HCT116 (cell line): ENCODE measurements at regions of chr3 and their contacts with region 1.

Region 1: GRCh38 chr3:16600780-16601539 is 4.3 kb downstream of the DAZL start:
- DNase-seq: peak; percentile 72
- ATAC-seq: peak; percentile 85
- H3K4me3 ChIP-seq: peak overlapping the region in 1 of 2 experiments; percentile 34; a peak in 1 of 4 replicates
- H3K27ac ChIP-seq: no peak overlapping the region
- H3K4me1 ChIP-seq: no peaks in the 10 kb centered on the region
- H3K27me3 ChIP-seq: no peaks in the 10 kb centered on the region
- CTCF ChIP-seq: peak; percentile 60 to 69 (median 69)
- POLR2A ChIP-seq: no peak
- RAD21 ChIP-seq: peak; percentile 92

Region 2: DNA sequence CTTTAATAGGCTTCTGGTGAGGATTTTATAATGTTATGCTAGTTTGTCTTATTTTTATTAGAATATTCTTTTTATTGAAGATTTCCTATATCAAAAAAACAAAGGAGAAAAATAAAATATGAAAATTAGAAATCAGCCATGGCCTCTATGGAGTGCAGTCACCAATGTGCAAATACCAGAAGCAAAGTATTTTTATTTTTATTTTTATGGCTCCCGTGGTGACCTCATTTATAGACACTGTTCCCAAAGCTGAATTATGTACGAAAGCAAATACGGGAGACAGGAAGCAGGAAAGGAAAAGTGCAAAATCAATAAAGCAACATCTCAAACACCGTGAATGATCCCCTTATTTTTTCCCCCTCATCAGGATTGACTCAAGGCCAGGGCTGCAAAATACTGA is 30.8 kb before region 1 on chr3:
- CTCF ChIA-PET with region 1: no interaction called
- POLR2A ChIA-PET with region 1: no interaction called
- RAD21 ChIA-PET with region 1: no interaction called
- intact Hi-C with region 1: no loop called
- DNase-seq: no peak
- ATAC-seq: no peak
- H3K4me3 ChIP-seq: no peak overlapping the region
- H3K27ac ChIP-seq: no peak overlapping the region
- H3K4me1 ChIP-seq: no peaks in the 10 kb centered on the region
- H3K27me3 ChIP-seq: no peaks in the 10 kb centered on the region
- CTCF ChIP-seq: no peak
- POLR2A ChIP-seq: no peak
- RAD21 ChIP-seq: no peak

Region 3: DNA sequence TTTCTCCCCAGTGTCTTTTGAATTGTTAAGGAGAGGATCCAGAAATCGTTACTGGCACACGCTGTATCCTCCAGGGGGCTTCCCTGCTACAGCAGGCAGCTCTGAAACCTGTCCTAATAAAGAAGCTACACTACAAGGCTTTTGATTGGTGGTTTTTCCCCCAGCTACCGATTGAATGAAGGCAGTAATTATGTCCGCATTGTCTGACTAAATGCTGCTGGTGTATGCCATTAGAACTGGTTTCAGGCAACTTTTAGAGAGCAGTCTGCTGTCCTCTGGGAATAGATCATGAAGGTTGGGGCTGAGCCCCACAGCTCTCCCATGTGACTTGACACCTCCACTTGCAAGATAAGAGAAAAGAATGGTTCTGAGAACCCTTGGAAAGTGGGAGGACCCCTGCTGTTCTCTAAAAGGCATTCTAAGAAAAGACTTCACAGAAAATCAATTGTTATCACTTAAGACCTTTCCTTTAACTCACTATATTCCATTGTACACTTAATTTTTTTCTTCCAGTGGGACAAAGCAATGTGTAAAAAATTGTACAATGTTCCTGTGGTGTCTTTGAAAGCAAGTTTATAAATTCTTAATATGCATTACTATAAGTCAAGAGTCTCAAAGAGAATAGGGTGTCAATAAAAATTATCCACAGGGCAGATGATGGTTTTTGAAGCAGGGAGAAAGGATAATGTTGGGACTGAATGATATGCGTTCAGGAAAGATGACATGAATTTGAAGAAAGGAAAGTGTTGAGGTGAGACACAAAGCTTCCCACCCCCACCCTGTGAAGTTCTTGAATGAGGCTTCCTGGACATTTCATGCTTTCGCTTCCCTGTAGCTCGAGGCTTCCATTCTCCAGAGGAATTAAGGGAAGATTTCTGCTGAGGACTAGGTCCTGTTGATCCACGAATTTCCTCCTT is 57.3 kb after region 1 on chr3:
- CTCF ChIA-PET with region 1: no interaction called
- POLR2A ChIA-PET with region 1: no interaction called
- RAD21 ChIA-PET with region 1: no interaction called
- intact Hi-C with region 1: no loop called
- DNase-seq: no peak
- ATAC-seq: no peak
- H3K4me3 ChIP-seq: no peak overlapping the region
- H3K27ac ChIP-seq: no peak overlapping the region
- H3K4me1 ChIP-seq: no peaks in the 10 kb centered on the region
- H3K27me3 ChIP-seq: no peaks in the 10 kb centered on the region
- CTCF ChIP-seq: no peak
- POLR2A ChIP-seq: no peak
- RAD21 ChIP-seq: peak; percentile 10; the same call in 1 of the 2 replicates

Region 4: GRCh38 chr3:16828815-16829214 is 227.9 kb after region 1 on chr3:
- CTCF ChIA-PET with region 1: interaction called, 13 read pairs
- POLR2A ChIA-PET with region 1: no interaction called
- RAD21 ChIA-PET with region 1: interaction called in 1 of 2 experiments, 5 read pairs
- intact Hi-C with region 1: loop called (anchors 10 kb)
- DNase-seq: peak; percentile 55
- ATAC-seq: peak; percentile 82
- H3K4me3 ChIP-seq: no peak overlapping the region
- H3K27ac ChIP-seq: no peak overlapping the region
- H3K4me1 ChIP-seq: peaks cover 0 to 5% of the 10 kb centered on the region in 2 experiments; a peak in 1 of 4 replicates
- H3K27me3 ChIP-seq: no peaks in the 10 kb centered on the region
- CTCF ChIP-seq: peak; percentile 60 to 66 (median 61); a peak in 5 of 6 replicates
- POLR2A ChIP-seq: no peak
- RAD21 ChIP-seq: peak; percentile 71

Region 5: DNA sequence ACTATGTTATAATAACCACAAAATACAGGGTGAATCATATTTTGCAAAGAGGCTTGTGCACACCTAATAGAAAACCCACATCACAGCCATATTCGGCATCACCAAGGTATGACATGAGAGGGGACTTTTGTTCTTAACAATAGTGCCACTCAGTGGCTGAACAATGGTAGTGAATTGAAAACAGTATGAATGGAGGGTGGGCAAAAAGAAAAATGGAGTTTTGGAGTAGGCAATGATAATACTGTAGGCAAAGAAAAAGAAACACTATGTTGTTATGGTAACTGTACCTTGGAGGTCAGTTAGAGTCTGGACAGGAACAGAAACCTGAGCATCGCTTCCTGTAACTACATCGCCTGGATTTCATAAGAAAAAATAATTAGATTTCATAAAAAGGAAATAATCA is 632.4 kb after region 1 on chr3:
- CTCF ChIA-PET with region 1: interaction called, 6 read pairs
- POLR2A ChIA-PET with region 1: no interaction called
- RAD21 ChIA-PET with region 1: no interaction called
- intact Hi-C with region 1: loop called (anchors 1 kb)
- DNase-seq: peak; percentile 52
- ATAC-seq: peak; percentile 99
- H3K4me3 ChIP-seq: no peak overlapping the region
- H3K27ac ChIP-seq: no peak overlapping the region
- H3K4me1 ChIP-seq: no peaks in the 10 kb centered on the region
- H3K27me3 ChIP-seq: no peaks in the 10 kb centered on the region
- CTCF ChIP-seq: peak; percentile 59 to 79 (median 75)
- POLR2A ChIP-seq: no peak
- RAD21 ChIP-seq: peak; percentile 85

Region 6: DNA sequence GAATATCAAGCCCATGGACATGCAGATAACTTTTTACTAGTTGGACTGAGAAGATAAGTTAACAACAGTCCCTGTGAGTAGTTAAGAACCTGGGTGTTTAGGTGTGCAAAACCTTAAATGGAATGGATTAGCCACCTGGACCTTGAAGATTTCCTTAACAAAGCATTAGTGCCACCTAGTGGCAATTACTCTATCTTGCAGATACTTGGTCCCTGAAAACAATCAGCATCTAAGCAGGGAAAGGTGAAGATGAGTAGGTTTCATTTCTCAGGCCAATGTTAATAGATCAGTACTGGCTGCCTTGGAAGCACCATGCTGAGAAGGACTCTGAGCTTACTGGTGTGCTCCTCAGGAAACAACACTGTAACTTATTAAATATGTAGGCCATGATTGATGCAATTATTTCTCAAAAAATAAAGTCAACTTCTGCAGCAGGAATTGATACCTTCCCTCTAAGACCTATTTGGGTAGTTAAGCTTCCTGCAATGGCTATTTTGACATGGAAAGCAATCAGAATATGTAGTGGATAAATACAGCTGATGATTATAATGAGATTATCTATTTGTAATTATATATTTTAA is 812.1 kb after region 1 on chr3:
- CTCF ChIA-PET with region 1: no interaction called
- POLR2A ChIA-PET with region 1: no interaction called
- RAD21 ChIA-PET with region 1: no interaction called
- intact Hi-C with region 1: loop called (anchors 2 kb)
- DNase-seq: peak; percentile 56
- ATAC-seq: peak; percentile 84
- H3K4me3 ChIP-seq: no peak overlapping the region
- H3K27ac ChIP-seq: no peak overlapping the region
- H3K4me1 ChIP-seq: no peaks in the 10 kb centered on the region
- H3K27me3 ChIP-seq: no peaks in the 10 kb centered on the region
- CTCF ChIP-seq: peak; percentile 66 to 83 (median 74); a peak in 5 of 6 replicates
- POLR2A ChIP-seq: no peak
- RAD21 ChIP-seq: peak; percentile 82